ENCODE measurements at regions of chr2 and their contacts with region 1.

Region 1: DNA sequence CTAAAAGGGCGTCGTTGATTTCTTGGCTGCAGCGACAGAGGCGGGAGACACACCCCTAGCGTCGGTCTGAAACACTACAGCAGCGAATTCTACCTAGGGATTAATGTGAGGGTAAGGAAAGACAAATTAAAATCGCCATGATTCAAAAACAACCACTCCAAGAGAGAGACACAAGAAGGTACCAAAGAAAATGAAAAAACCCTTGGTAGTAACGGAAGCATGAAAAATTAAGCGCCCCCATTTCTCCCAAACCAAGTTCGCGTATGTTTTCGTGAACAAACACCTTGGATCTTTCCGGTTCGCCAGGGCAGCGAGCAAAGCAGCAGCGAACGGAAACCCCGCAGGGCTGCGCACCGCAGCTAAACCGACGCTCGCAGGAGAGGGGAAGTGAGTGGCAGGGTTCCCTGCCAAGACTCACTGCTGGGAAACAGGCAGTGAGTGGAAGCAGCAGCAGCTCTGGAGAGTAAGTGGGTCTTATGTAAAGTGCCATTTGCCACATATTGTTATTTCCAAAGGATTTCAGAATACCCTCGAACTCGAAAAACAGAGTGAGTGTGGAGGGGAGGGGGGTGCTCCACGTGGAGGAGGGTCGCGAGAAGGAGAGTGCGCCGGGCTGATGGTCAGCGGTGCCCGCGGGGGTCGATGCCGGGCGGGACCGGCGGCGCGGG is 1.0 kb downstream of the PPP3R1 start:
- DNase-seq: peak; percentile 87
- ATAC-seq: peak; percentile 71
- H3K4me3 Mint-ChIP-seq: peak overlapping the region; percentile 98
- H3K27ac Mint-ChIP-seq: peak overlapping the region; percentile 97
- H3K4me1 Mint-ChIP-seq: peaks cover 35% of the 10 kb centered on the region
- H3K27me3 Mint-ChIP-seq: no peaks in the 10 kb centered on the region

Region 2: GRCh38 chr2:68062680-68063387 is 188.5 kb before region 1 on chr2 and contains the start of gene C1D:
- CTCF ChIA-PET with region 1: no interaction called
- POLR2A ChIA-PET with region 1: interaction called, 3 read pairs
- intact Hi-C with region 1: loop called (anchors 1 to 10 kb)
- DNase-seq: peak; percentile 96
- ATAC-seq: peak; percentile 92
- H3K4me3 Mint-ChIP-seq: peak within 1 kb of the TSS; percentile 89
- H3K27ac Mint-ChIP-seq: peak within 1 kb of the TSS; percentile 95
- H3K4me1 Mint-ChIP-seq: peaks cover 28% of the 10 kb centered on the region
- H3K27me3 Mint-ChIP-seq: no peaks in the 10 kb centered on the region
- total RNA-seq, gene C1D: 11.3 to 21.4 TPM

Region 3: GRCh38 chr2:68196120-68196716 is 55.1 kb before region 1 on chr2:
- CTCF ChIA-PET with region 1: interaction called, 13 read pairs
- POLR2A ChIA-PET with region 1: no interaction called
- intact Hi-C with region 1: loop called (anchors 2 to 5 kb)
- DNase-seq: peak; percentile 57
- ATAC-seq: no peak
- H3K4me3 Mint-ChIP-seq: no peak overlapping the region
- H3K27ac Mint-ChIP-seq: no peak overlapping the region
- H3K4me1 Mint-ChIP-seq: peaks cover 52% of the 10 kb centered on the region
- H3K27me3 Mint-ChIP-seq: no peaks in the 10 kb centered on the region

Region 4: DNA sequence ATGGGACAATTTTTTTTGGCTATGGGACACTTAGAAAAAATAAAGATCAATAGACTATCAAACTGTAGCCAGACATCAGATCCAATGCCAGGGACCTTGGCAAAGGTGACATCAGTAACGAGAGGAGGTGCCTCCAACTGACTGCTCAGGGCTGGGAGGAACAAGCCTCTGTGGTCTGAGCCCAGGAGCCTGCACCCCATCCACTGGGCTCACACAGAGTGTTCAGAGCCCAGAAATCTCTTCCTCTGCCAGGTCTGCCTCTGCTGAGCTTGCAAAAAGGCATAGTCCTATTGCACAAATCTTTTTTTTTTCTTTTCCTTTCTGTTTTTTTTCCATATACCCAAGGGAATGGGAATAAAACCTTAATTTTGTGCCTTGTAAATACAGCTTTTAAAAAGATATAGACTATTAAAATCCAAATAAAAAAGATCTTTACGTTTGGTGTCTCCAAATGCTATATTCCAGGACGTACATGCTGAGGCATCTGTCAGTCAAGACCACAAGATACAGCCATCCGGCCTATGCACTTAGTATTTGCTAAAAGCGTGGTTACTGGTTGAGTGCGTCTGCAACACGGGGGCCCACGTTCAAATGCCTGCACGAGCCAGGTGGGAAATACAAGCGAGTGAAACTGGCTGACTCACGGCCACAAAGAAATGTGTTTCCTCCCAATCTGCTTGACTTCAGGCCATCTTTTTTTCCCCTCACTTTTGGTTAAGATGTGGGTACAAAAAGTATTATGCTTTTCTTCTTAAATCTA is 475.5 kb after region 1 on chr2:
- CTCF ChIA-PET with region 1: no interaction called
- POLR2A ChIA-PET with region 1: no interaction called
- intact Hi-C with region 1: loop called in 1 of 2 experiments (anchors 5 kb)
- DNase-seq: peak; percentile 90
- ATAC-seq: peak; percentile 95
- H3K4me3 Mint-ChIP-seq: peak overlapping the region; percentile 19
- H3K27ac Mint-ChIP-seq: peak overlapping the region; percentile 82
- H3K4me1 Mint-ChIP-seq: peaks cover 72% of the 10 kb centered on the region
- H3K27me3 Mint-ChIP-seq: no peaks in the 10 kb centered on the region

Region 5: DNA sequence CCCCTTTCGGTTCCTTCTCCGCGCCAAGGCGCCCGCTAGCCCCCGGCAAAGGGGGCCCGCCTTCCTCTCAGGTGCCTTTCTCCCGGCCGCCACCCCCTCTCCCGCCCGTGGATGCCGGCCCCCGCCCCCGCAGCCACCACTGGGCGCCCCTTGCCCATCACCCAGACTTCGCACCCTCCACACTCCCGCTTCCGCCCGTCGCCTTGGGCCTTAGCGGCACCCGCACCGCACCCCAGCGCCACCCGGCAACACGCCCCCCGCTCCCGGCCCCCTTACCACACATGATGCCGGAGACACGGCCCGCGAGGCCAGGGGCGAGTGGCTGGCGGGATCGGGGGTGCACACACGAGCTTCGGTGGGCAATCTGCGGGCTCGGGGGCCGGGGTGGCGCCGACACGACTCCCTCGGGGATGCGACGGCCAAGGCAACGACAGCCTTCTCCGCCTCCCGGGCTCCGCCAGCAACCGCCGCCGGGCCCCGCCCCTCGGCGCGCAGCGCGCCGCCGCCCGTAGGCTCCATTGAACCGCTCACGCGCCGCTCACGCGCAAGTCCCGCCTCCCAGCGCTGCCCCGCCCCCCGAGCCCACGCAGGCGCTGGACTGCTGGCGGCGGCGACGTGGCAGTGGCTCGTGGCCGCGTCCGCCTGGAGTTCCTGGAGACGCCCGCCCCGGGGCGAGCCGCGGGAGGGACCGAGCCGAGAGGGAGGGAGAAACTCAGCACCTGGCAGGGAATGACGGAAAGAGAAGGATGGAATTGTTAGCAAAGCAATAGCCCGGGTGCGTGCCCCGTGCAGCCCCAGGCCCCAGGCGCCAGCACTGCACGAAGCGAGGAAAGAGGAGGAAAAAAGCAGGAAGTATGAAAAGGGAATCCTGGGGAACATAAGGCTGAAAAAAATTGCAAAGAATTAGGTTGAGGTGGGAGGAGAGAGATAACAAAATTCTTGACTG is 1135.7 kb after region 1 on chr2 and contains the start of gene GFPT1:
- CTCF ChIA-PET with region 1: no interaction called
- POLR2A ChIA-PET with region 1: no interaction called
- intact Hi-C with region 1: loop called in 1 of 2 experiments (anchors 1 kb)
- DNase-seq: peak; percentile 96
- ATAC-seq: peak; percentile 96
- H3K4me3 Mint-ChIP-seq: peak within 1 kb of the TSS; percentile 81
- H3K27ac Mint-ChIP-seq: peak within 1 kb of the TSS; percentile 92
- H3K4me1 Mint-ChIP-seq: peaks cover 45% of the 10 kb centered on the region
- H3K27me3 Mint-ChIP-seq: no peaks in the 10 kb centered on the region
- total RNA-seq, gene GFPT1: 31.0 to 36.1 TPM